HAP-1 (cell line): ENCODE measurements at regions of chr1 and their contacts with region 1.

Region 1: GRCh38 chr1:180863158-180863775 is 49.4 kb upstream of the KIAA1614 start:
- DNase-seq: peak; percentile 54 to 61
- H3K4me3 ChIP-seq: no peak overlapping the region
- H3K4me1 ChIP-seq: peaks cover 18% of the 10 kb centered on the region
- H3K27me3 ChIP-seq: no peaks in the 10 kb centered on the region

Region 2: DNA sequence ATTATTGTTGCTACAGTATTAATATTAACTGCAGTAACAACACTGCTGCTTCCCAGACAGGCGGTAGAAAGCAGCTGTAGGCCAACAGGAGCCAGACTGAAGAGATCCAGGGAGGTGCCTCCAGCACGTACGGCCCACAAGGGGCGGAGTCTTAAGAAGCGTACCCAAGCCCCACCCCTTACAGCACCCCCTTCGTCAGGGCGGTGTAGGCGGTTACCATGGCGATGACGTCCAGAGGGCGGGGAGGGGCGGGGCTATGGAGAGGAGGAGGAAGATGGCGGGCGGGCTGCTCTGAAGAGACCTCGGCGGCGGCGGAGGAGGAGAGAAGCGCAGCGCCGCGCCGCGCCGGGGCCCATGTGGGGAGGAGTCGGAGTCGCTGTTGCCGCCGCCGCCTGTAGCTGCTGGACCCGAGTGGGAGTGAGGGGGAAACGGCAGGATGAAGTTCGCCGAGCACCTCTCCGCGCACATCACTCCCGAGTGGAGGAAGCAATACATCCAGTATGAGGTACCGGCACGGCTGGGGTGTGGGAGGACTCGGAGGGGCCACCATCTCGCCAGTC is 231.4 kb before region 1 on chr1 and contains the start of gene XPR1:
- in situ Hi-C with region 1: loop called (anchors 25 kb)
- DNase-seq: peak; percentile 97 to 99
- H3K4me3 ChIP-seq: peak within 1 kb of the TSS; percentile 96
- H3K4me1 ChIP-seq: peaks cover 27% of the 10 kb centered on the region
- H3K27me3 ChIP-seq: no peaks in the 10 kb centered on the region